ENCODE measurements at regions of chr7 and their contacts with region 1.

Region 1: DNA sequence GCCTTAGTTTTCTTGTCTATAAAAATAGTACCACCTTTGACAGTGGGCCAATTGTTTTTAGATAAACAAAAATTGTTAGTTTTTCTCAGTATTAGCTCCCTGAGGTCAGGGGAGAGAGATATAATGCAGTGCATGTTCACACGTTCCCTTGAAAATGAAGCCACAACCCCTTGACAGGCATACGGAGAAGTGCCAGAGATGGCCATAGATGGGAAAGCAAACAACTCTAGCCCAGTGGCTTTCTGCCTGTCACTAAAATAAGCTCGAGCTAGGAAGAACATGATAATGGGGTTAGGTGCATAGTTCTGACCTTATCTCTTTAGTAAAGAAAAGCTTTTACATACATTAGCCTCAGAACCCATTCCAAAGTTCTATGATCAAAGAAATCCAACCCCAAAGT is 124.9 kb downstream of the CHRM2 start:
- DNase-seq: no peak
- ATAC-seq: peak; percentile 62 to 83 (median 76)
- H3K4me3 ChIP-seq: no peak overlapping the region
- H3K27ac ChIP-seq: peak overlapping the region in 11 of 12 donors; percentile 3 to 74 (median 60)
- H3K4me1 ChIP-seq: peaks cover 0 to 33% (median 6%) of the 10 kb centered on the region in 12 donors
- H3K27me3 ChIP-seq: no peaks in the 10 kb centered on the region
- CTCF ChIP-seq: no peak
- POLR2A ChIP-seq: no peak

Region 2: GRCh38 chr7:136956232-136956631 is 37.1 kb before region 1 on chr7:
- intact Hi-C with region 1: loop called in 1 of 10 experiments (anchors 5 kb)
- DNase-seq: no peak
- ATAC-seq: no peak
- H3K4me3 ChIP-seq: no peak overlapping the region
- H3K27ac ChIP-seq: peak overlapping the region in 5 of 12 donors; percentile 5 to 44 (median 19)
- H3K4me1 ChIP-seq: peaks cover 0 to 21% (median 5%) of the 10 kb centered on the region in 12 donors
- H3K27me3 ChIP-seq: no peaks in the 10 kb centered on the region
- CTCF ChIP-seq: no peak
- POLR2A ChIP-seq: no peak